H1 (cell line): ENCODE measurements at regions of chr1 and their contacts with region 1.

Region 1: DNA sequence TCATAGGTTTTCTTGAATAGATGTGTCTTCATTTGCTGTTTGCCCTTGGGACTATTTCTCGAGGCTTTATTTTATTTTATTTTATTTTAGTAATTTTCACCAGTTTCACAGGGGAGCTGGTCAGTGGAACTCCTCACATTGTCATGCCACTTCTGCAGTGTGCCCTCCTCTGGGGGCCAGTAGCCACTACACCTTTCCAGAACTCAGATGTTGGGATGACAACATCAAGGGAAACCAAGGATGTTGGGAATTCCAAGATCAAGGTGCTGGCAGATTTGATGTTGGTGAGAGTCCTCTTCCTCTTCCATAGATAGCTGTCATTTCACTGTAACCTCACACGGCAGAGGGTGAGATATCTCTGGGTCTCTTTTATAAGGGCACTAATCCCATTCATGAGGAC is 35.5 kb downstream of the SLC26A9 start:
- DNase-seq: no peak
- H3K4me3 ChIP-seq: no peak overlapping the region
- H3K27ac ChIP-seq: no peak overlapping the region
- H3K4me1 ChIP-seq: no peaks in the 10 kb centered on the region
- H3K27me3 ChIP-seq: no peaks in the 10 kb centered on the region
- CTCF ChIP-seq: peak; percentile 70 to 79 (median 71)
- EP300 ChIP-seq: no peak
- POLR2A ChIP-seq: no peak
- RAD21 ChIP-seq: peak; percentile 71 to 79

Region 2: DNA sequence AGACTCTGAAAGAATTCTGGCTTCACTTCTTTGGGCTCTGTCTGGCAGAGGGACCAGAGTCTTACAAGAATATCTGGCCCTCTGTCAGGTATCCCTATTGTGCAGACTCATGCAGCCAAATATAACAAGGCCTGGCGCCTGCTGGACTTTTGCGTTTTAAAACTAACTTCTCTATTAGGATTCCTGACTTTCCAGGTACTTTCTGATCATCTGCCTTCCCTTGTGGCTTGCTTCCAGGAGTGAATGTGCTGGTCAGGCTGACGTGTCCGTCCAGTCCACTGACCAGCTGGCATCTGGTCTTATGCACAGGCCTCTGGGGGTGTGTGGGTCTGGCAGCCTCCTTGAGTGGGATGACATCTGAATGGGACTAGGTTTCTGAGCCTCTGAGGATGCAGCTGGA is 123.9 kb before region 1 on chr1:
- CTCF ChIA-PET with region 1: interaction called, 10 read pairs
- POLR2A ChIA-PET with region 1: interaction called, 6 read pairs
- DNase-seq: no peak
- H3K4me3 ChIP-seq: no peak overlapping the region
- H3K27ac ChIP-seq: no peak overlapping the region
- H3K4me1 ChIP-seq: no peaks in the 10 kb centered on the region
- H3K27me3 ChIP-seq: no peaks in the 10 kb centered on the region
- CTCF ChIP-seq: no peak
- EP300 ChIP-seq: no peak
- POLR2A ChIP-seq: no peak
- RAD21 ChIP-seq: no peak

Region 3: DNA sequence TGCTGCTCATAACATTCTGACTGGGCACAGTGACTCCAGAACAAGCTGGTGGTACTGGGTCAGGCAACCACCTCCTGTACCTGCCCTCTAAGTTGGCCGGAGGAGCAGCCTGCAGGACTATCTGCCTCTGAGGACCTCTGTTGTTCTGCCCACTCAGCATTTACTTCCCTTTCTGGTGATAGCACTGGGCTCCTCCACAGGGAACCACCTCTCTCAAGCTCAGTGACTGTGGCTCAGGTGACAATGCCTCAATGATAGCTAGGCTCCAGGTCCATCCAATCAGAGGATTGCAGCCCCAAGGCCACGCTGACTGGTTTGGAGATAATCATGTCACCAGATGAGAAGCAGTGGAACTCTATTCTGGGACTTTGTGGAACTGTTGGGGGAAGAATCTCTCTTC is 110.6 kb before region 1 on chr1:
- CTCF ChIA-PET with region 1: interaction called, 68 read pairs
- POLR2A ChIA-PET with region 1: no interaction called
- DNase-seq: no peak
- H3K4me3 ChIP-seq: no peak overlapping the region
- H3K27ac ChIP-seq: no peak overlapping the region
- H3K4me1 ChIP-seq: peaks cover 0 to 3% (median 0%) of the 10 kb centered on the region in 4 experiments; a peak in 1 of 7 replicates
- H3K27me3 ChIP-seq: no peaks in the 10 kb centered on the region
- CTCF ChIP-seq: no peak
- EP300 ChIP-seq: no peak
- POLR2A ChIP-seq: no peak
- RAD21 ChIP-seq: no peak

Region 4: DNA sequence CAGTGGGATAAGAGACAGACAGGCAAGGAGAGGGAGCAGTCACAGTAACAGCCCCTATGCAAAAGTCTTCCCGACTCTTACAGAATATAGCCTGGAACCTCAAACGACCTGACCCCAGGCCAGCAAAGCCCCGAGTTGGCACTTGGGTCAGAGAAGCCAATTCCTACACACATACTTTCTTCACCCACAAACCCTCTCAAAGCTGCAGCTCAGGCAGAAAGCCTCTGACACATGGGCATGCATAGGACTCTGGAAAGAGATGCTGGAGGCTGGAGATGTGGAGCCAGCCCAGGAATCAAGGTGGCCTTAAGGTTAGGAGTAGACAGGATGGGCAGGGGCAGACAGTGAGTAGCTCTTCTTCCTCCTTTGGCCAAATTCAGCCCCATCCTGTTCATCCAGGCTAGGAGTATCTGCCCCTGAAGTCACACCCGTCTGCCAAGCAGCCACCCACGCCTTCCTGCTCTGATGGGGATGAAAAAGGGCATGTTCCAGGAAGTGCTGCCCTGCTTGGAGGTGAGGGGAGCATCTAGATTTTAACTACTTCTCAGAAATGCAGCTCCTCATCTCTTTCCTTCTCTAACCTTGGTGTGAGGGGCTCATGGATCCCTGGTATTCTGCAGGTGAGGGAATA is 102.6 kb before region 1 on chr1:
- CTCF ChIA-PET with region 1: interaction called, 22 read pairs
- POLR2A ChIA-PET with region 1: no interaction called
- DNase-seq: no peak
- H3K4me3 ChIP-seq: no peak overlapping the region
- H3K27ac ChIP-seq: no peak overlapping the region
- H3K4me1 ChIP-seq: peaks cover 0 to 5% (median 0%) of the 10 kb centered on the region in 4 experiments; a peak in 3 of 7 replicates
- H3K27me3 ChIP-seq: no peaks in the 10 kb centered on the region
- CTCF ChIP-seq: no peak
- EP300 ChIP-seq: no peak
- POLR2A ChIP-seq: no peak
- RAD21 ChIP-seq: no peak

Region 5: DNA sequence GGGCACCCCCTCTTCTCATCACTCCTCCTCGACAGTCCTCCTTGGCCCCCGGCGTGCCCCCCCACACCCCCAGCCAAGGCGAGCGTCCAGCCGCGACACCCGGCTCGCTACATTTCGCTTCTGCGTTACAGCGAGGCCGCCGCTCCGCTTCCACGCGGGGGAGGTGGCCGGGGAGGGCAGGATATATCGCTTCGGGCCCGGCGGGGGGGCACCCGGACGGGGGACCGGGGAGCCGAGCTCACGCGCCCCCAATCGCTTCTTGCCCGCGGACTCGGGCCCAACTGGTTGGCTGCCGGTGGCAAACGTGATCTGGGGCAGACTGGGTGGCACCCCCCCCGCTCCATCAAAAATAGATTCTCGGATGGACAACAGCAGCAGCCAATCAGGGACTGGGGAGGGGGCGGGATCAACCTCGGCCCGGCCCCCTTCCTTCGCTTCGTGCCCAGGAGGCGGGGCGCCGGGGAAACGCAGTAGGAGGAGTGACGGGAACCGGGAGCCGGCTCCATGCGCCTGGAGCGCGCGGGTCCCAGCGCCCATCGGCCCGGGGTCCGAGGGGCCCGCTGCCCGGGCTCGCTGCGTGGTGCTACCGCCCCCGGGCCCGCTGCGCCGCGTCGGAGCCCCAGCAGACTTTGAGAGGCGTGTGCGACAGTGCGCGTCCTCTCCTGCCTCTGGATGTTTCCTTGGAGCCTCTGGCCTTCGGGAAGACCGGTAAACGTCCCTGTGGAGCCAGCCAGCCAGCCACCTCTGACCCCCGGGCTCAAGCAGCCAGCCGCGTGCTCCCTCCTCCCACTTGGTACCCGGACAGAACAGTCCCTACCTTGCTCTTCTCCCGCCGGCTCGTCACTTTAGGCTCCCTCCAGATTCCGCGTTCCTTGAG is 94.7 kb before region 1 on chr1 and contains the start of gene SLC41A1:
- CTCF ChIA-PET with region 1: interaction called, 22 read pairs
- POLR2A ChIA-PET with region 1: no interaction called
- DNase-seq: peak; percentile 74 to 94
- H3K4me3 ChIP-seq: peak within 1 kb of the TSS; percentile 49 to 94 (median 64)
- H3K27ac ChIP-seq: peak within 1 kb of the TSS; percentile 26; the same call in 1 of the 2 replicates
- H3K4me1 ChIP-seq: peaks cover 2 to 7% (median 6%) of the 10 kb centered on the region in 4 experiments; a peak in 5 of 7 replicates
- H3K27me3 ChIP-seq: peaks cover 0 to 3% (median 0%) of the 10 kb centered on the region in 4 experiments; a peak in 2 of 7 replicates
- CTCF ChIP-seq: no peak
- EP300 ChIP-seq: no peak
- POLR2A ChIP-seq: peak; percentile 50 to 92
- RAD21 ChIP-seq: no peak
- total RNA-seq, gene SLC41A1: 42.3 and 43.2 TPM in 2 replicates

Region 6: DNA sequence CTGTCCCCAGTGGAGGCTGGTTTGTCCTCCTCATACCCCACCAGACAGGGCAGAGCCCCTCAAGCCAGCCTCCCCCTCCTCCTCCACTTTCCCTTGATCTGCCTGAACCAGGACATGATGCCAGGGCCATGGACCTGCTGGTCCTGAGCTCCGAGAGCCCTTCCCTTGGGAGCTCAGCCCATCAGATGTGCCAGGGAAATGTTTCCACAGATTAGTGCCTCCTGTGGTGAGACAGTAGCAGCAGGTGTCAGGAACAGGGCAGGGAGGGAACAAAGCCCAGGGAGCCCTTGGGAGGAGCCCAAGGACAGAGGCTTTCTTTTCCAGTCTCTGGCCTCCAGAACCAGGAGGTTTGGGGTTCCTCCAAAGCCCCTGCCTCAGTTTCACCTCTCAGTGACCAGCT is 80.2 kb before region 1 on chr1:
- CTCF ChIA-PET with region 1: interaction called, 12 read pairs
- POLR2A ChIA-PET with region 1: no interaction called
- DNase-seq: no peak
- H3K4me3 ChIP-seq: no peak overlapping the region
- H3K27ac ChIP-seq: no peak overlapping the region
- H3K4me1 ChIP-seq: peaks cover 0 to 12% (median 2%) of the 10 kb centered on the region in 4 experiments; a peak in 4 of 7 replicates
- H3K27me3 ChIP-seq: no peaks in the 10 kb centered on the region
- CTCF ChIP-seq: no peak
- EP300 ChIP-seq: no peak
- POLR2A ChIP-seq: no peak
- RAD21 ChIP-seq: no peak

Region 7: DNA sequence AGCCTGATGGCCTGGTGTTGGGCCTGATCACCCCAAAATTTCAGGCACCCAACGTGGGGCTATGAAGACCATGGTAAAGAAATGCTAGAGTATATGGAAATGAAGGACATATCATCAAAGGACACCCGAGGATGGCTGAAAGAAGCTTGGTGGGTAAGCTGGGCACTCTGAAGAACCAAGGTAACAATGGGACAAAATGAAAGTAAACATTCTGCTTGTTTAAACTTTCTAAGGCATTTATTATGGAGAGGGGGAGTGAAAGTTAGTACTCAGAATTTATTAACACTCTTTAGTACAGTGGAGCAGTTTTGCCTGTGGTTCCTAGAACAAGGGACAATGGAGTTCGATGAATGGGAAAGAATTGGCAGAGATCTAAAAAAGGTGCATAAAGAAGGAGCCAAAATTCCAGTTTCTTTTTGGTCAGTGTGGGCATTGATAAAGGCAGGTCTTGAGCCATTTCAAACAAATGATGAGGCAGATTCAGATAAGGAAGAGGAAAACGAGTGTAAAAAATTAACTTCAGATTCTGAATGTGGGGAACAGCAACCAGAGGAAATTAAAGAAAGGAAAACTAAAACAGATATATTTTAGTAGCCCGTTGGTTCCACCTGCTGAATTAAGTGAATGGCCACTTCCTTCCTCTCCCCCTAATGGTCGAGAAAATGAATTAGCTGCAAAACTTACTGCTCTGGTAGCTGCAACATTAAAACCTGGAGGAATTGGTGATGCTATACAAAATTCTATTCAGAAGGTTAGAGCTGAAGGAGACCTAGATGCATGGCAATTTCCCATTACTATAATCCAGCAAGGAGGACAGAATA is 49.4 kb before region 1 on chr1:
- CTCF ChIA-PET with region 1: no interaction called
- POLR2A ChIA-PET with region 1: no interaction called
- DNase-seq: no peak
- H3K4me3 ChIP-seq: no peak overlapping the region
- H3K27ac ChIP-seq: no peak overlapping the region
- H3K4me1 ChIP-seq: no peaks in the 10 kb centered on the region
- H3K27me3 ChIP-seq: no peaks in the 10 kb centered on the region
- CTCF ChIP-seq: no peak
- EP300 ChIP-seq: no peak
- POLR2A ChIP-seq: no peak
- RAD21 ChIP-seq: no peak

Region 8: DNA sequence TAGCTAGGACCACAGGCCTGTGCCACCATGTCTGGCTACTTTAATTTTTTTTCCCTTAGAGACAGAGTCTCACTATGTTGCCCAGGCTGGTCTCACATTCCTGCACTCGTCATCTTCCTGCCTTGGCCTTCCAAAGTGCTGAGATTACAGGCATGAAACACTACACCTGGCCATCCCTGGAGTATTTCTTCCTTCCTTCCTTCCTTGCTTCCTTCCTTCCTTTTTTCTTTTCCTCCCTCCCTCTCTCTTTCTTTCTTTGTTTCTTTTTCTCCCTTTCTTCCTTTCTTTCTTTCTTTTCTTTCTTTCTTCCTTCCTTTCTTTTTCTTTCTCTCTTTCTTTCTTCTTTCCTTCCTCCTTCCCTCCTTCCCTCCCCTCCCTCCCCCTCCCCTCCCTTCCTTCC is 11.5 kb before region 1 on chr1:
- CTCF ChIA-PET with region 1: interaction called, 15 read pairs
- POLR2A ChIA-PET with region 1: no interaction called
- DNase-seq: no peak
- H3K4me3 ChIP-seq: no peak overlapping the region
- H3K27ac ChIP-seq: no peak overlapping the region
- H3K4me1 ChIP-seq: no peaks in the 10 kb centered on the region; a peak in 1 of 7 replicates
- H3K27me3 ChIP-seq: no peaks in the 10 kb centered on the region
- CTCF ChIP-seq: no peak
- EP300 ChIP-seq: no peak
- POLR2A ChIP-seq: no peak
- RAD21 ChIP-seq: no peak